ENCODE measurements at regions of chr1 and their contacts with region 1.

Region 1: DNA sequence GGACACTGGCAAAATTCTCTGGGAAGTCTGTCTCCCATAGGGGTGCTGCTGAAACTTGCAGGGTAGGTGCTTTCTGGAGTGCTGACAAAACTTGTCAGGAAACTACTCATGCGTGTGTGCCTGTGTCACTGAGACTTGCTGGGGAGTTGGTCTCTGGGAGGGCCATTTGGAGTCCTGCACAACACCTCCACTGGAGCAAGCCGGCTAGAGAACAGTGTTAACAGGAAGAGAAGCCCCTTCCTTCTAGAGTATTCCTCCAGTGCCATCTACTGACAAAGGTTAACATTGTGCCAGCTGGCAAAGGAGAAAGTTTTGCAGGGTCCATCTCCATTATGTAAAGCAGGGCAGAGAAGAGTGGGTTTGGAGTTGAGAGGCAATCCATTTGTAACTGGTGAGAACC is 30.0 kb downstream of the ZMYM4 start:
- DNase-seq: peak; percentile 37
- ATAC-seq: peak; percentile 64
- H3K4me3 ChIP-seq: no peak overlapping the region
- H3K27ac ChIP-seq: no peak overlapping the region
- H3K4me1 ChIP-seq: no peaks in the 10 kb centered on the region
- H3K27me3 ChIP-seq: no peaks in the 10 kb centered on the region
- CTCF ChIP-seq: peak; percentile 63

Region 2: DNA sequence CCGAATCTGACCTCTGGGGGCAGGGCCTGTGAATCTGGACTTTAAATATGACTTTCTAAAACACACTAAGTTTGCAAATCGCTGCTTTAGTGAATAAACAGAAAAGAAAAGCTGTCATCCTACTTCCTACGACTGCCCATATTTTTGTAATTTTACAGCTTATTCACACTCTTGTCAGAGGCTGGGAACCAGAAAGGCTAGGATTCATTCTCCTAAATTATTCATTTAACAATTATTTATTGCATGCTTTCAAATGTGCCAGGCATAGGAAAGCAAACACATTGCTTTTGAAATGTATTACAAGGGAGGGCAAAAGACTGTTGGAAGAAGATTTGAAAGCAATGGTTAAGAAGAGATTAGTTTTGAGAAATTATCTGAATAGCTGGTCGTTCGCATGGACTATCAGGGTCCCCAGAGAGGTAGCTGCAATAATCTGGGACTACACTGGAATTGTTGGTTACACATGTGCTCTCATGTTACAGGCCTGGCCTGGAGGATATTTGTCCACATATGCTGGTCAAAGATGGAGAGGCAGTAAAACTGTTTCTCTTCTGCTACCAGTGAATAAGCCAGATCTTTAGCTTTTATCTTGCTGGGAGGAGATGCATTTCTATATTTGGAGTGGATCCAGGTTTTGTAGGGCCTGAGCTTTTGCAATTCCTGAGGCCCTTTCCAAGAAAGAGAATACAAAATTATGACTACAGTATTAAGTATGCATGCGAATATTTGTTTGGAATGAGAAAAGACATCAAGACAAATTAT is 76.0 kb before region 1 on chr1:
- CTCF ChIA-PET with region 1: no interaction called
- POLR2A ChIA-PET with region 1: interaction called, 18 read pairs
- intact Hi-C with region 1: no loop called
- DNase-seq: no peak
- ATAC-seq: no peak
- H3K4me3 ChIP-seq: no peak overlapping the region
- H3K27ac ChIP-seq: no peak overlapping the region
- H3K4me1 ChIP-seq: no peaks in the 10 kb centered on the region
- H3K27me3 ChIP-seq: no peaks in the 10 kb centered on the region
- CTCF ChIP-seq: no peak

Region 3: DNA sequence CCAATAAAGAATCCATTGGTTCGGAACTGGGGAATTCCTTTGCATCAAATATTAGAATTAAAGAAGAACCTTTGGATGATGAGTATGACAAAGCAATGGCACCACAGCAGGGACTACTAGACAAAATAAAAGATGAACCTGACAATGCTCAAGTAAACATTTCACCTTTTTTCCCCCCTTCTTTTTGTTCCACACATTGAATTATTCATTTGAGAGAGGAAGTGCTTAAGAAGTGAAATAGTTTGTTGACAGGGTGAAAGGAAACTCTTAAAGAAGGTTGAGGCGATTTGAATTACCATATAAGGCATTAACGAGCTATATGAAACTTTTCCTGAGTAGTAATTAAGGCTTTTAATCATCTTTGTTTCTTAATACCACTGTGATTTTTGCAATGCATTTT is 63.2 kb after region 1 on chr1:
- CTCF ChIA-PET with region 1: no interaction called
- POLR2A ChIA-PET with region 1: no interaction called
- intact Hi-C with region 1: no loop called
- DNase-seq: no peak
- ATAC-seq: no peak
- H3K4me3 ChIP-seq: no peak overlapping the region
- H3K27ac ChIP-seq: no peak overlapping the region
- H3K4me1 ChIP-seq: no peaks in the 10 kb centered on the region
- H3K27me3 ChIP-seq: no peaks in the 10 kb centered on the region
- CTCF ChIP-seq: no peak